Thyroid gland (tissue), 4 donors: ENCODE measurements at regions of chr1 and their contacts with region 1.

Region 1: GRCh38 chr1:201999625-202000238 is 10.7 kb upstream of the ELF3 start:
- DNase-seq: peak; percentile 40 to 47
- H3K4me3 ChIP-seq: no peak overlapping the region
- H3K27ac ChIP-seq: no peak overlapping the region
- H3K4me1 ChIP-seq: no peaks in the 10 kb centered on the region
- H3K27me3 ChIP-seq: no peaks in the 10 kb centered on the region
- CTCF ChIP-seq: peak; percentile 45 to 81 (median 64)
- POLR2A ChIP-seq: no peak

Region 2: GRCh38 chr1:202105539-202106276 is 106.0 kb after region 1 on chr1:
- intact Hi-C with region 1: no loop called
- DNase-seq: peak; percentile 58 to 61
- H3K4me3 ChIP-seq: no peak overlapping the region
- H3K27ac ChIP-seq: peak overlapping the region; percentile 89 to 95 (median 90)
- H3K4me1 ChIP-seq: peaks cover 18 to 38% of the 10 kb centered on the region in 2 donors
- H3K27me3 ChIP-seq: no peaks in the 10 kb centered on the region
- CTCF ChIP-seq: no peak
- POLR2A ChIP-seq: peak in 1 of 2 donors; percentile 54

Region 3: DNA sequence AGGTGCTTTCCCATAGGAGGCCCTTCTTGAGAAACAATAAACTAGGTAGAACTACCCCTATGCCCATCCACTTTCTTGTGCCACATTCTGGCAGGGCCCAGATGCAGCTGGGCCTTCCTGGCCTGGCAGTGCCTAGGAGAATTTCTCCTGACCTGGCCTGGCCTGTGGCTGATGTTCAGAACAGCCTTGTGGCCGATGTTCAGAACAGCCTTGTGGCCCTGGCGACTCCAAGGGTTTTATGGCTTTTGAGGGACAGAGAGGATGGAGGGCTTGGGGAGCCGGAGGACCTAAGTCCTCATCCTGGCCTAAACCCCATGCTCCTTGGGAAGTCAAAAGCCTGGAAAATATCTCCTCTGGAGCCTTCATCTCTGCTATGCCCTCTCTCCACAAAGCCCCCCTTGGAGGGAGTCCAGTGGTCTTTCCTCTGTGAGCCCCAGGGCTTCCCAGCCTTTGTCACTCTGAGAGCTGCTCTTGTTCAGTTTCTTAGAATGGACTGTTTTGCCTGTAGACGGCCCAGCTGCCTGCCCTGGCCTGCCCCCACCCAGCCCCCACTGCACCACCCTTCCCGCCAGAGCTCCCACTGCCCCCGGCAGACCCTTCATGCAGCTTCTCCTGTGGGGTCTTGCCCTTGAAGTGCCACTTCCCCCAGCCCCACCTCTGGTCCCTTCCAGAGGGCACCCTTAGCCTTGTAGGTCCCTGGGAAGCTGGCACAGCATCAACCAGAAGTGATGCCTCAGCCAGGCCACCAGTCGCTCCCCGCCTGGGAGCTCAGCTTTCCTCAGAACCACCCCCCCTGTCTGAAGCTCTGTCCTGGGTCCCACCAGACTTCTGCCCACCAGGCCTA is 129.9 kb after region 1 on chr1:
- intact Hi-C with region 1: loop called (anchors 5 kb)
- DNase-seq: no peak
- H3K4me3 ChIP-seq: no peak overlapping the region
- H3K27ac ChIP-seq: peak overlapping the region in 2 of 3 donors; percentile 81 to 96
- H3K4me1 ChIP-seq: peaks cover 32 to 49% of the 10 kb centered on the region in 2 donors
- H3K27me3 ChIP-seq: no peaks in the 10 kb centered on the region
- CTCF ChIP-seq: no peak
- POLR2A ChIP-seq: no peak

Region 4: DNA sequence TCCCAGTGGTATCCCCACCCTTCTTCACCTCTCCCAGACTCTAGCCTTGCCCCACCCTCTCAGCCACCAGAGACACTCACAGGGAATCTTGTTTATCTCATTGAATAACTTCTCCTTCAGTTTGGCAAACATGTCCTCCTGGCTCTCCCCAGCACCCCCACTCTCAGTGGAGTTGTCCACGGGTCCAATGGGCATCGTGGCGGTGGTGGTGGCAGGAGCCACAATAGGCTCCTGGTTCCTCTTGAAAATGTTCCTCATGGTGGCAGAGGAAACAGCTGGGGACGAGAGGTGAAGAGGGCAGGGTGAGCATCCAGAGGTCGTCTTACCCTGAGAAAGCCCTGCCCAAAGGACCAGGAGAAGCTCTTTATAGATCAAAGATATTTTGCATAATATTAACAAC is 605.8 kb after region 1 on chr1:
- intact Hi-C with region 1: no loop called
- DNase-seq: no peak
- H3K4me3 ChIP-seq: no peak overlapping the region
- H3K27ac ChIP-seq: no peak overlapping the region
- H3K4me1 ChIP-seq: no peaks in the 10 kb centered on the region
- H3K27me3 ChIP-seq: no peaks in the 10 kb centered on the region
- CTCF ChIP-seq: no peak
- POLR2A ChIP-seq: no peak